K562 (cell line): ENCODE measurements at regions of chr7 and their contacts with region 1.

Region 1: GRCh38 chr7:85023045-85023712 is 163.7 kb downstream of the SEMA3D start:
- DNase-seq: peak; percentile 31 to 61 (median 38)
- ATAC-seq: no peak; the same call in 2 of the 3 replicates
- H3K4me3 ChIP-seq: no peak overlapping the region
- H3K27ac ChIP-seq: no peak overlapping the region
- H3K4me1 ChIP-seq: no peaks in the 10 kb centered on the region
- H3K27me3 ChIP-seq: no peaks in the 10 kb centered on the region
- CTCF ChIP-seq: peak; percentile 37 to 80 (median 57); a peak in 4 of 6 replicates
- EP300 ChIP-seq: no peak
- POLR2A ChIP-seq: no peak
- RAD21 ChIP-seq: peak; percentile 95 to 96

Region 2: DNA sequence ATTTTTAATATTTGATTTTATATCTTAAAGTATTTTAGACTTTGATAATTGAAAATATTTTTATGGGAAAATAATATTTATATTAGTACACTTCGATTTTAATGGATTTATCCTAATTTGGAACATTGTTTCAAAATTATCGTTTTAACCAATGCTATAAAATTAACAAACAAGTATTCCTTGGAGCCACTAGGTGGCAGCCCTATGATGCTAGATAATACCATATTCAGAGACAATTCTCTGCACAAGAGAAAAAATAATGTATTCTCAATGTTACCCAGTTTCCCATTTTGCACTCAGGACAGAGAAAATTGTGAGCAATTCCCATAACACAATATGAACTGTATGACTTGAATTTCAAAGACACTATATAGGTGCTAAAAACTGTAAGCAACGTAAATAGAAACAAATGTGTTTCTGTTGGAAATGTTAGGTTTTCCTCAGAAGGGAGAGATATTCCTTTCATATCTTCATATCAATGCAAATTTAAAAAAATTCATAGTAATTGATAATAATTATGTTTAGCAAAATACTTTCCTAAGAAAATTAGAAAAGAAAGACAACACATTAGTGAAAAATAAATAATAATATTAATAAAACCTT is 1612.1 kb before region 1 on chr7:
- CTCF ChIA-PET with region 1: no interaction called
- POLR2A ChIA-PET with region 1: no interaction called
- in situ Hi-C with region 1: no loop called
- intact Hi-C with region 1: loop called (anchors 5 kb)
- DNase-seq: peak; percentile 11 to 36 (median 16)
- ATAC-seq: no peak
- H3K4me3 ChIP-seq: no peak overlapping the region
- H3K27ac ChIP-seq: no peak overlapping the region
- H3K4me1 ChIP-seq: no peaks in the 10 kb centered on the region
- H3K27me3 ChIP-seq: no peaks in the 10 kb centered on the region
- CTCF ChIP-seq: peak in 2 of 3 experiments; percentile 38 to 50; a peak in 4 of 6 replicates
- EP300 ChIP-seq: no peak
- POLR2A ChIP-seq: no peak
- RAD21 ChIP-seq: peak; percentile 29 to 55; a peak in 3 of 4 replicates

Region 3: DNA sequence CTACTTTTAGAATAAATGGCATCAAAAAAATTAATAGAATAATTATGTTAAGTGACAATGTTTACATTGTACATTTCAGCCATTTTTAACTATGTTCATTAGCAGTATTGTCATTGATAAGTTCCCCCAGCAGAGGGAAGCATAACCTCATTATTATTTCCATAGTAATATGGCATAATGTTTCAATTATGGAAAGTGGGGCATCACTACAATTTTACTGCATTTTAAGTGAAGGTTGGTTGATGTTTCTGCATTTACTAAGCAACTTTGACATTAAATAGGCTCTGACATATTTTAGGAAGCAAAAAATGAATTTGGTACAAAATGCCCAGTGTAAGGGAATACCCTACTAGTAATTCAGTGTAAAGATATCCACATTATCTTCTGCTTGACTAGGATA is 1046.9 kb before region 1 on chr7:
- CTCF ChIA-PET with region 1: interaction called, 88 read pairs
- POLR2A ChIA-PET with region 1: no interaction called
- in situ Hi-C with region 1: loop called (anchors 5 kb)
- intact Hi-C with region 1: loop called (anchors 1 kb)
- DNase-seq: peak; percentile 16 to 48 (median 20)
- ATAC-seq: peak; percentile 74
- H3K4me3 ChIP-seq: no peak overlapping the region
- H3K27ac ChIP-seq: no peak overlapping the region
- H3K4me1 ChIP-seq: no peaks in the 10 kb centered on the region
- H3K27me3 ChIP-seq: no peaks in the 10 kb centered on the region
- CTCF ChIP-seq: peak; percentile 33 to 68 (median 33); a peak in 3 of 6 replicates
- EP300 ChIP-seq: no peak
- POLR2A ChIP-seq: no peak
- RAD21 ChIP-seq: peak; percentile 93

Region 4: DNA sequence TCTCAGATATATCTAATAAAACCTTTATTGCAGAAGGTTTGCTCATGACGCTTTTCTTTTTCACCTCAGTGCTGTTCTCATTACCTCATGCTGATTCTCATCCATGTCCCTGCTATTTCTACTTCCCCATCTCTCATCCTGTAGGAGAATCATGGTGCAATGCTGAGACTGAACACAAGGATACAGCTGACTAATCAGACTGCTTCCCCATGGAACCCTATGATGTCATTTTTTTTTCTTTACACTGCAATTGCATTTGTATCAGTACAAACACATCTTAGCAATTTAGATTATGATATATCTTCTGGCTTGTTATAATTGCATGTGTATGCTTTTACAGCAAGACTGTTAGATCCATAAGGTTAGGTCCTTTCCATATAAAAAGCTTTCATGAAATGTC is 922.3 kb before region 1 on chr7:
- CTCF ChIA-PET with region 1: no interaction called
- POLR2A ChIA-PET with region 1: no interaction called
- in situ Hi-C with region 1: no loop called
- intact Hi-C with region 1: no loop called
- DNase-seq: peak in 1 of 4 experiments; percentile 7
- ATAC-seq: no peak
- H3K4me3 ChIP-seq: no peak overlapping the region
- H3K27ac ChIP-seq: no peak overlapping the region
- H3K4me1 ChIP-seq: no peaks in the 10 kb centered on the region
- H3K27me3 ChIP-seq: no peaks in the 10 kb centered on the region
- CTCF ChIP-seq: no peak
- EP300 ChIP-seq: no peak
- POLR2A ChIP-seq: no peak
- RAD21 ChIP-seq: no peak

Region 5: DNA sequence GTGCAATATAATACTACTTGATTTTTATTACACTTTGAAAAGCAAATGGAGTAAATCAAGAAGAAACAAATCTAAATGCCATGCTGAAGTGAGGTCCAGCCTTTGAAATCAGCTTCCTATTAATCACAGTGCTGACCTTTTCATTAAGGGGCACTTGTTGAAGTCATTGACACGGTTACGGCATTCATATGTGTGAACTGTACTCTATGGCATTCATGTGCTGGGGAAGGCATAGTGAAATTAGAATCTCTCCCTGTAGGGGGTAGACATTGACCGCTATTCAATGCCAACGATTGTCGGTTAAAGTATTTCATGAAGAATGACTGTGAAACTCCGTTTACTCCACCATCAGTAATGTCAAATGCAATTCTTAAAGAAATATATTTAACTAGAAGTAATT is 532.5 kb before region 1 on chr7:
- CTCF ChIA-PET with region 1: interaction called, 38 read pairs
- POLR2A ChIA-PET with region 1: no interaction called
- in situ Hi-C with region 1: loop called (anchors 10 kb)
- intact Hi-C with region 1: loop called (anchors 1 kb)
- DNase-seq: peak in 3 of 4 experiments; percentile 12 to 20 (median 14)
- ATAC-seq: peak; percentile 71; the same call in 2 of the 3 replicates
- H3K4me3 ChIP-seq: no peak overlapping the region
- H3K27ac ChIP-seq: no peak overlapping the region
- H3K4me1 ChIP-seq: no peaks in the 10 kb centered on the region
- H3K27me3 ChIP-seq: no peaks in the 10 kb centered on the region
- CTCF ChIP-seq: peak in 2 of 3 experiments; percentile 10 to 45; a peak in 4 of 6 replicates
- EP300 ChIP-seq: no peak
- POLR2A ChIP-seq: no peak
- RAD21 ChIP-seq: peak; percentile 74 to 78

Region 6: DNA sequence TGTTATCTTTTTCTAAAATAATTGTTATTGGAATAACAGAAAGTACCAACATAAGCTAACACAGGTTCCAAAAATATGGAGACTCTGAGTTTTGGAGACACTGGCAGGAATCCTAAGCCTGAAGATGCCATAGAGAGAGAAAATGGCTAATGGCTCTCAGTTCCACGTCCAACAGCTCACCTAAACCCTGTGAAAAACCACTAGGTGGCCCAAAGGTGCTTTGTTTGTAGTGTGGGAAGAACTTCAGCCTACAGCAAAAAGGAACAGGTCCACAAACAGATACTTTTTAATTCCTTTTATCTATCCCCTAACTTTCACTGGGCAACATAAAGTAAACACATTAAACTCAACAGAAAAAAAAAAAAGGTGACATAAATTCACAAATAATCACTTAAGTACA is 108.6 kb before region 1 on chr7:
- CTCF ChIA-PET with region 1: interaction called, 6 read pairs
- POLR2A ChIA-PET with region 1: no interaction called
- in situ Hi-C with region 1: no loop called
- intact Hi-C with region 1: loop called (anchors 2 kb)
- DNase-seq: peak in 2 of 4 experiments; percentile 17 to 60
- ATAC-seq: peak; percentile 84
- H3K4me3 ChIP-seq: no peak overlapping the region
- H3K27ac ChIP-seq: no peak overlapping the region
- H3K4me1 ChIP-seq: peaks cover 0 to 25% of the 10 kb centered on the region in 2 experiments; a peak in 3 of 5 replicates
- H3K27me3 ChIP-seq: no peaks in the 10 kb centered on the region
- CTCF ChIP-seq: peak; percentile 21 to 51 (median 24); a peak in 3 of 6 replicates
- EP300 ChIP-seq: no peak
- POLR2A ChIP-seq: no peak
- RAD21 ChIP-seq: peak in 1 of 2 experiments; percentile 66; a peak in 3 of 4 replicates

Region 7: GRCh38 chr7:85154282-85154937 is 131.2 kb after region 1 on chr7:
- CTCF ChIA-PET with region 1: no interaction called
- POLR2A ChIA-PET with region 1: no interaction called
- in situ Hi-C with region 1: no loop called
- intact Hi-C with region 1: no loop called
- DNase-seq: no peak
- ATAC-seq: no peak
- H3K4me3 ChIP-seq: no peak overlapping the region
- H3K27ac ChIP-seq: no peak overlapping the region
- H3K4me1 ChIP-seq: no peaks in the 10 kb centered on the region
- H3K27me3 ChIP-seq: no peaks in the 10 kb centered on the region
- CTCF ChIP-seq: no peak
- EP300 ChIP-seq: no peak
- POLR2A ChIP-seq: no peak
- RAD21 ChIP-seq: no peak